HepG2 (cell line): ENCODE measurements at regions of chr14 and their contacts with region 1.

Region 1: DNA sequence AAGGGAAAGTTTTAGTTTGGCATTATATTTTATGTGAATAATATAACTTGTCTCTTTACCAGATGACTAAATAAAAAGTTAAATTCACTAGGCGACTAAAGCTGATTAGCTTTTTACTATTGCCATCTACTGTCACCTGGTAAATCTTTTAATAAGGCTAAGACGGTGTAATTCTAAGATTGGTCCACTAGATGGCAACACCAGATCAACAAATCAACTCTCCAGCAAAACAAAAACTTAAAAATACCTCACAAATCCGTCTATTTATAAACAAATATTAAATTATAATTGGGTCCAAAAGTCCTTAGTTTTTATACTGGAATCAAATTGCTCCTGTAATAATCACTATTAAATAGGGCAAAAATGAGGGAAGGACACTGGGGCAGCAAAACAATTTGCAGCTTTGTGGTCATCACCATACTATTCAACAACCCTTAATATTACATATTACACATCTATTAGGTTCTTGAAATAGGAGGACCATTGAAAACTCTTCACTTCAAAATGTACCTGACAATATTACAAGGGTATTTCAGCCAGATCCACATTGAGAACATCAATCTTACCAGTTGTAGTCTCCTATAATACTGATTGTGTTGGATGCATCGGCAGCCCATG is 47.9 kb downstream of the GALC start:
- DNase-seq: peak; percentile 29
- ATAC-seq: no peak
- H3K4me3 ChIP-seq: no peak overlapping the region
- H3K27ac ChIP-seq: no peak overlapping the region
- H3K4me1 ChIP-seq: no peaks in the 10 kb centered on the region
- H3K27me3 ChIP-seq: no peaks in the 10 kb centered on the region; a peak in 1 of 5 replicates
- CTCF ChIP-seq: peak; percentile 65
- EP300 ChIP-seq: no peak
- POLR2A ChIP-seq: no peak
- RAD21 ChIP-seq: no peak

Region 2: GRCh38 chr14:87810711-87811110 is 134.4 kb before region 1 on chr14:
- CTCF ChIA-PET with region 1: no interaction called
- POLR2A ChIA-PET with region 1: no interaction called
- in situ Hi-C with region 1: no loop called
- intact Hi-C with region 1: no loop called
- DNase-seq: no peak
- ATAC-seq: no peak
- H3K4me3 ChIP-seq: no peak overlapping the region
- H3K27ac ChIP-seq: no peak overlapping the region
- H3K4me1 ChIP-seq: no peaks in the 10 kb centered on the region
- H3K27me3 ChIP-seq: peaks cover 0 to 4% of the 10 kb centered on the region in 2 experiments; a peak in 1 of 5 replicates
- CTCF ChIP-seq: no peak
- EP300 ChIP-seq: no peak
- POLR2A ChIP-seq: no peak
- RAD21 ChIP-seq: no peak

Region 3: GRCh38 chr14:87934185-87934584 is 10.9 kb before region 1 on chr14:
- CTCF ChIA-PET with region 1: no interaction called
- POLR2A ChIA-PET with region 1: no interaction called
- in situ Hi-C with region 1: no loop called
- intact Hi-C with region 1: no loop called
- DNase-seq: no peak
- ATAC-seq: peak; percentile 76
- H3K4me3 ChIP-seq: no peak overlapping the region
- H3K27ac ChIP-seq: no peak overlapping the region
- H3K4me1 ChIP-seq: no peaks in the 10 kb centered on the region
- H3K27me3 ChIP-seq: no peaks in the 10 kb centered on the region
- CTCF ChIP-seq: no peak
- EP300 ChIP-seq: no peak
- POLR2A ChIP-seq: no peak
- RAD21 ChIP-seq: no peak

Region 4: DNA sequence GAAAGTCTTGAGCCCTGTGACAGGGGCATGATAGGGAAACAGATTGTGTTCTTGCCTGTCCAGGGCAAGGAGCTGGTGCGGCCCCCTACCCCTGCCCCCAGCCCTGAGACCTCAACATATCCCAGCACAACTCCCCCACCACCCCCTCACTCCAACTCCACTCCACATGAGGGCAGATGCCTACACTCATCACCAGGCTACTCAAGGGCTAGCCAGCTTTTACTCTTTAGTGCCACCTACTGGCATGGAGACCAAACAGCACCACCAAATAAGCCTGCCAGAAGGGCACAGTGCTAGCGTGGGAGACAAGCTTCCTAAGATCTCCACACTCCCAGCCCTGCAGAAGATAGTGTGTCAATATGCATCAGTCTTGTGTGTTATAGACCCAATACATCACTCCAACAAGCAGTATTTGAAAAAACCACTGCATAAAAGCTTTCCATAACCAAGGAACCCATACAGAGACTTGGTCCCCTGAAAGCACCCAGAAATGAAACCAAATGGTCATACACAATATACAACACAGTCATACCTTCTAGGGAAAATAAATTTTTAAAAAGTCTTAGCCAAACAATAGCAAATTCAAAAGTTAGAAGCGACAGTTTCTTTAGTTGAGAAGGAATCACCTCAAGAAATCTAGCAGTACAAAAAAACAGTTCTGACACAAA is 223.5 kb after region 1 on chr14:
- CTCF ChIA-PET with region 1: interaction called, 3 read pairs
- POLR2A ChIA-PET with region 1: no interaction called
- in situ Hi-C with region 1: loop called (anchors 10 kb)
- intact Hi-C with region 1: loop called (anchors 1 kb)
- DNase-seq: peak; percentile 50
- ATAC-seq: peak; percentile 95
- H3K4me3 ChIP-seq: no peak overlapping the region
- H3K27ac ChIP-seq: no peak overlapping the region
- H3K4me1 ChIP-seq: peaks cover 19% of the 10 kb centered on the region
- H3K27me3 ChIP-seq: no peaks in the 10 kb centered on the region
- CTCF ChIP-seq: peak; percentile 89
- EP300 ChIP-seq: no peak
- POLR2A ChIP-seq: no peak
- RAD21 ChIP-seq: peak; percentile 40; the same call in 1 of the 2 replicates

Region 5: GRCh38 chr14:88233915-88234314 is 288.8 kb after region 1 on chr14:
- CTCF ChIA-PET with region 1: interaction called, 8 read pairs
- POLR2A ChIA-PET with region 1: no interaction called
- in situ Hi-C with region 1: loop called (anchors 5 kb)
- intact Hi-C with region 1: loop called (anchors 1 kb)
- DNase-seq: peak; percentile 40
- ATAC-seq: peak; percentile 83
- H3K4me3 ChIP-seq: no peak overlapping the region
- H3K27ac ChIP-seq: no peak overlapping the region
- H3K4me1 ChIP-seq: no peaks in the 10 kb centered on the region
- H3K27me3 ChIP-seq: no peaks in the 10 kb centered on the region; a peak in 1 of 5 replicates
- CTCF ChIP-seq: peak; percentile 70
- EP300 ChIP-seq: no peak
- POLR2A ChIP-seq: no peak
- RAD21 ChIP-seq: peak; percentile 40

Region 6: DNA sequence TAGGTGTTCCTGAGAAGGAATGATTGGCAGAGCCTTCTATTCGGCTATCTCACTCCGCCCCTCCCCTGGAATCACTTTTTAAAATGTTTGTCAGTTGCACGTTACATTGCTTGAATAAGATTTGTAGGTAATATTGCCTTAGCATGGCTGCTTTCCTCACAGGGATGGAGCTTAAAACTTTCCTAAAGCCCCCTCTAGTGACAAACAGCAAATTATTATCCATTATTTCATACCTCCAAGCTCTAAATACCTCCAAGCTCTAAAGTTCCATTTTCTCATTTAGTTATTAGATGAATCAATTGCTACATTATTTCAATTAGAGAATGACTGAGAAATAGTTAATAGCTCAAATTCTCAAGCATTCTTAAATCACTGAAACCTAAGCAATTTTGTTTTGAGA is 435.3 kb after region 1 on chr14:
- CTCF ChIA-PET with region 1: no interaction called
- POLR2A ChIA-PET with region 1: no interaction called
- in situ Hi-C with region 1: no loop called
- intact Hi-C with region 1: loop called (anchors 5 kb)
- DNase-seq: no peak
- ATAC-seq: 0 out of 3 replicates have a peak, but pooled peaks have one; percentile 19
- H3K4me3 ChIP-seq: no peak overlapping the region
- H3K27ac ChIP-seq: no peak overlapping the region
- H3K4me1 ChIP-seq: peaks cover 8% of the 10 kb centered on the region
- H3K27me3 ChIP-seq: no peaks in the 10 kb centered on the region
- CTCF ChIP-seq: peak; percentile 49
- EP300 ChIP-seq: no peak
- POLR2A ChIP-seq: no peak
- RAD21 ChIP-seq: no peak

Region 7: DNA sequence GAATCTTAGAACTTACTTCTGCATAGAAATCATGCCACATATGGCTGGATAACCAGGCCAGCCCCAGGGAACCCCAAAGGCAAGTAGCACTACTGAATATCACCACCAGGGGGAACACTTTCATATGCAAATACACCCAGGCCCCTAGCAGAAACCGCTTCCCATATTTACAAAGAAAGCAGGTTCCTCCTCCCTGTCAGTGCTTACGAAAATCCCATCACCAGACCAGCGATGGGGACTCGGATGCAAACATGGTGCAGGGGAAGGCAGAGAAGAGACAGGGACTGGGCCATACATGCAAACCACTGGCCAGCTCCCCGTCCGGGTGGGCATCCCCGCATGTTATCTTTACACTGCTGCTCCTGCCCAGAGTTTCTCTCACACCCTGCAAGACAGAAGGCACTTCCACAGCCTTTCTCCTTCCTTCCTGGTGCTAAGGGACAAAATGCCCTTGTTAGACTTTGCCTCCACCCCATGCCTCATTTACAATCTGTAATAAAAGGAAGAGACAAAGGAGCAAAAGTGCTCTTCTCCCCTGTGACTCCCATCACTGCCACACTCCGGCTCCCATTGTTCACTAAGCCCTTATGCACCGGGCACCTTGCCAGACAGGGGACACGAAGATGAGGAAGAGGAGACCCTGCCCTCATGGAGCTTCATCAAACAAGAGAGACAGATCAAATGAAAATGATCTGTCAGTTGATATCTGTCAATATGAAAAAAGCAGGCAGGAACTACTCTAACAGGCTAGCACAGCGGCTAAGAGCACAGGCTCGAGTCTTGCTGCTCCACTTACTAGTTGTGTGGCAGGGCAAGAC is 547.4 kb after region 1 on chr14:
- CTCF ChIA-PET with region 1: interaction called, 3 read pairs
- POLR2A ChIA-PET with region 1: no interaction called
- in situ Hi-C with region 1: no loop called
- intact Hi-C with region 1: loop called (anchors 5 kb)
- DNase-seq: peak; percentile 65
- ATAC-seq: peak; percentile 95
- H3K4me3 ChIP-seq: no peak overlapping the region
- H3K27ac ChIP-seq: no peak overlapping the region
- H3K4me1 ChIP-seq: no peaks in the 10 kb centered on the region
- H3K27me3 ChIP-seq: no peaks in the 10 kb centered on the region
- CTCF ChIP-seq: peak; percentile 80
- EP300 ChIP-seq: no peak
- POLR2A ChIP-seq: no peak
- RAD21 ChIP-seq: peak; percentile 72